Activated CD4-positive, alpha-beta memory T cell treated with anti-CD3 and anti-CD28 coated beads for 36 hours (primary cell): ENCODE measurements at regions of chr1 and their contacts with region 1.

Region 1: GRCh38 chr1:115717541-115717940 is 51.0 kb downstream of the CASQ2 start:
- DNase-seq: peak; percentile 41
- H3K4me3 Mint-ChIP-seq: no peak overlapping the region
- H3K27ac Mint-ChIP-seq: no peak overlapping the region
- H3K4me1 Mint-ChIP-seq: no peaks in the 10 kb centered on the region
- H3K27me3 Mint-ChIP-seq: peaks cover 7% of the 10 kb centered on the region

Region 2: GRCh38 chr1:115450501-115451040 is 267.0 kb before region 1 on chr1:
- CTCF ChIA-PET with region 1: no interaction called
- POLR2A ChIA-PET with region 1: no interaction called
- intact Hi-C with region 1: no loop called
- DNase-seq: no peak
- H3K4me3 Mint-ChIP-seq: no peak overlapping the region
- H3K27ac Mint-ChIP-seq: no peak overlapping the region
- H3K4me1 Mint-ChIP-seq: no peaks in the 10 kb centered on the region
- H3K27me3 Mint-ChIP-seq: peaks cover 4% of the 10 kb centered on the region

Region 3: DNA sequence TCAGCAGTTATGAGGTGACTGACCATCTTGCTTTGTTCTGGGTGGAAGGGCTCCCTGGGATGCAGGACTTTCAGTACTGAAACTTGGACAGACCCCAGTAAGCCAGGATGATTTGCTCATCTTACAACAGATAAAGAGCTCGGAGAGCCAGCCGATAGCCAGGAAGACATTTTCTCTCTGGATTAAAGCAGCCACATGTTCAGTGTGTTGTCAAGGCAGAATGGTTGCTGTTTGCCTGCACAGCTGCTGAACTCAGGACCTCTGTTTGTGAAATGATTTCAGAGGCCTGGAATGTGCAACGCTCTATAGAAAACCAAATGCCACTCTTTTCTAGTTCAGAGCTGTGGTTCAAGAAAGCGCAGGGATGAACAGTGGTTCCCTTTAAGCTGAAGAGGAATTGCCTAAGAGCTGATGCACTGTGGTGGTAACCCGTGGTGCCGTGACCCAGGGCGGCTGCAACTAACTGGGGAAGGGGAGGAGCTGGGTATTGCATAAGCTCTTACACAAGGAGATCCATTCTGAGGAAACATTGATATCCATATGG is 10.2 kb after region 1 on chr1:
- CTCF ChIA-PET with region 1: no interaction called
- POLR2A ChIA-PET with region 1: no interaction called
- intact Hi-C with region 1: no loop called
- DNase-seq: no peak
- H3K4me3 Mint-ChIP-seq: no peak overlapping the region
- H3K27ac Mint-ChIP-seq: no peak overlapping the region
- H3K4me1 Mint-ChIP-seq: no peaks in the 10 kb centered on the region
- H3K27me3 Mint-ChIP-seq: peaks cover 3% of the 10 kb centered on the region

Region 4: GRCh38 chr1:115771847-115772457 is 54.4 kb after region 1 on chr1:
- CTCF ChIA-PET with region 1: interaction called, 11 read pairs
- POLR2A ChIA-PET with region 1: no interaction called
- intact Hi-C with region 1: no loop called
- DNase-seq: peak; percentile 11
- H3K4me3 Mint-ChIP-seq: no peak overlapping the region
- H3K27ac Mint-ChIP-seq: no peak overlapping the region
- H3K4me1 Mint-ChIP-seq: no peaks in the 10 kb centered on the region
- H3K27me3 Mint-ChIP-seq: peaks cover 18% of the 10 kb centered on the region

Region 5: GRCh38 chr1:115782571-115783281 is 65.2 kb after region 1 on chr1:
- CTCF ChIA-PET with region 1: no interaction called
- POLR2A ChIA-PET with region 1: no interaction called
- intact Hi-C with region 1: no loop called
- DNase-seq: no peak
- H3K4me3 Mint-ChIP-seq: no peak overlapping the region
- H3K27ac Mint-ChIP-seq: no peak overlapping the region
- H3K4me1 Mint-ChIP-seq: no peaks in the 10 kb centered on the region
- H3K27me3 Mint-ChIP-seq: peaks cover 27% of the 10 kb centered on the region

Region 6: DNA sequence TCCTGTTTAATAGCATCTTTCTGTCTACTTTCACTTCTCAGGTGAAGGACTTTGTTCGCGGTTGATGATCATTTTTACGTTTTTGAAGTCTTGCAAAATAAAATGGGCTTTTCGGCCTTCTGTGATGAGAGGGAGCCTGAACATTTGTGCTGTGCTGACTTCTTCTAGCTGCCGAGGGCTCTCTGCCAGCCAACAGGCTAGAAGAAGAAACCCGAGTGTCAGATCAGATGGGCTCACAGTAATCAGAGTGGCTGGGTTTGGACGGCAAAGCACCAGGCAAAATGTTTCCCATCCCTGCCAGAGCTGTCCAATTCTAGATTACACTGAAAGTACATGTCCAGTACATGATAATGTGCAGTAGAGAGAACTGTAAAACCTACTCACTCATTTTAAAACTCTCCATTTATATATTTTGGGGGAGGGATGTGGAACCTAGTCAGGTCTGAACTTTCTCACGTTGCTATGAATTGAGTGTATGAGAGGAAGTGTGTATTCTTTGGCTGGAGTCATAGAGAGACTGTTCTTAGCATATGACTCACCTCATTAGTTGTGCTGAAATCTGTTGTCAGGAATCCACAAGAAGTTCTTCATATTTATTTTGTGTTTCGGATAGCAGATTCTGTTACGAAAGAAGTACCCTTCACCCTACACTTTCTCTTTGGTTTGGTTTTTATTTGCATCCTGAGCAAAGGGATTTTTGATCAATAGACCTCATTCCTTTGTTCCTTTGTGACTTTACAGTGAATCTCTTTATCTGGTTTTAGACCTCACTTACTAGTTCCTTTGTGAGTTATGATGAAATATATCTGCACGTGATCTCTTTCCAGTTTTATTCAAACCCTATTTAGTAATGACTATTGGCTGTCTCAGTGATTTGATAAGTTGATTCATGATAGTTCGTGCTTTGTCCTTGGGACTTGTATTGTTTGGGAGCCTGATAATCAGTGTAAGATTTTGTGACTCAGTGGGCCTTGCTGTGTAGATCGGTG is 660.3 kb after region 1 on chr1:
- CTCF ChIA-PET with region 1: no interaction called
- POLR2A ChIA-PET with region 1: no interaction called
- intact Hi-C with region 1: no loop called
- DNase-seq: peak; percentile 55
- H3K4me3 Mint-ChIP-seq: peak overlapping the region; percentile 69
- H3K27ac Mint-ChIP-seq: peak overlapping the region; percentile 83
- H3K4me1 Mint-ChIP-seq: peaks cover 77% of the 10 kb centered on the region
- H3K27me3 Mint-ChIP-seq: no peaks in the 10 kb centered on the region